BJ (cell line): ENCODE measurements at regions of chr5 and their contacts with region 1.

Region 1: GRCh38 chr5:131589510-131590348 is 45.3 kb downstream of the RAPGEF6 start:
- DNase-seq: no peak
- H3K4me3 ChIP-seq: no peak overlapping the region
- H3K27me3 ChIP-seq: no peaks in the 10 kb centered on the region
- CTCF ChIP-seq: peak; percentile 84

Region 2: GRCh38 chr5:130528474-130528873 is 1061.3 kb before region 1 on chr5:
- CTCF ChIA-PET with region 1: no interaction called
- POLR2A ChIA-PET with region 1: no interaction called
- DNase-seq: no peak
- H3K4me3 ChIP-seq: no peak overlapping the region
- H3K27me3 ChIP-seq: no peaks in the 10 kb centered on the region
- CTCF ChIP-seq: no peak

Region 3: DNA sequence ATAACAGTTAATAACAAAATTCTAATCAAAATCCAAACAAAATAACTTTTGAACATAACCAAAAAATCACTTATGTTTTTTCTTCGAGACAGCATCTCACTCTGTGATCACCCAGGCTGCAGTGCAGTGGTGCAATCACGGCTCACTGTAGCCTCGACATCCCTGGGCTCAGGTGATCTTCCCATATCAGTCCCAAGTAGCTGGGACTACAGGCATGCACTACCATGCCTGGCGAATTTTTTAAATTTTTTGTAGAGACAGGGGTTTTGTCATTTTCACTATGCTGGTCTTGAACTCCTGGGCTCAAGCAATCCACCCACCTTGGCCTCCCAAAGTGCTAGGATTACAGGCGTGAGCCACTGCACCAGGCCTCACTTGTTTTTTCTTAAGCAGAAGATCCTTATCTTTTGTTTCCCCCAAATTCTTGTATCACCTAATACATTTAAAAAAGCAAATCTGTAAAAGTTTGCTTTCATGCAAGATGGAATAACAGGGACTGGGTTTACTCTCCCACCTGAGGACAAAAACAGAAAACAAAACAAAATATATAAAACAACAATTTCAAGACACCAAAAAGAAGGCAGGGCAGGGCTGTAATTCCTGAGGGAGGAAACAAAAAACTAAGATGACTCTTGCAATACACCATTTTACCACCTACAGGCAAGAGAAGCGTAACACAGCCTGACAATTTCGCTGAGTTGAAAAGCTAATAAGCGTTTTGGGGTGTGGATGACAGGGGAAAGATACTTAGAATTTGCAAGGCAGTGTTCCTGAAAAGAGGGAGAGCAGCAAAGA is 26.1 kb before region 1 on chr5:
- CTCF ChIA-PET with region 1: interaction called, 11 read pairs
- POLR2A ChIA-PET with region 1: no interaction called
- DNase-seq: no peak
- H3K4me3 ChIP-seq: no peak overlapping the region
- H3K27me3 ChIP-seq: no peaks in the 10 kb centered on the region
- CTCF ChIP-seq: no peak

Region 4: GRCh38 chr5:132001647-132002561 is 412.2 kb after region 1 on chr5:
- CTCF ChIA-PET with region 1: interaction called, 199 read pairs
- POLR2A ChIA-PET with region 1: no interaction called
- DNase-seq: no peak
- H3K4me3 ChIP-seq: no peak overlapping the region
- H3K27me3 ChIP-seq: no peaks in the 10 kb centered on the region
- CTCF ChIP-seq: no peak